B cell (primary cell): ENCODE measurements at regions of chr14 and their contacts with region 1.

Region 1: DNA sequence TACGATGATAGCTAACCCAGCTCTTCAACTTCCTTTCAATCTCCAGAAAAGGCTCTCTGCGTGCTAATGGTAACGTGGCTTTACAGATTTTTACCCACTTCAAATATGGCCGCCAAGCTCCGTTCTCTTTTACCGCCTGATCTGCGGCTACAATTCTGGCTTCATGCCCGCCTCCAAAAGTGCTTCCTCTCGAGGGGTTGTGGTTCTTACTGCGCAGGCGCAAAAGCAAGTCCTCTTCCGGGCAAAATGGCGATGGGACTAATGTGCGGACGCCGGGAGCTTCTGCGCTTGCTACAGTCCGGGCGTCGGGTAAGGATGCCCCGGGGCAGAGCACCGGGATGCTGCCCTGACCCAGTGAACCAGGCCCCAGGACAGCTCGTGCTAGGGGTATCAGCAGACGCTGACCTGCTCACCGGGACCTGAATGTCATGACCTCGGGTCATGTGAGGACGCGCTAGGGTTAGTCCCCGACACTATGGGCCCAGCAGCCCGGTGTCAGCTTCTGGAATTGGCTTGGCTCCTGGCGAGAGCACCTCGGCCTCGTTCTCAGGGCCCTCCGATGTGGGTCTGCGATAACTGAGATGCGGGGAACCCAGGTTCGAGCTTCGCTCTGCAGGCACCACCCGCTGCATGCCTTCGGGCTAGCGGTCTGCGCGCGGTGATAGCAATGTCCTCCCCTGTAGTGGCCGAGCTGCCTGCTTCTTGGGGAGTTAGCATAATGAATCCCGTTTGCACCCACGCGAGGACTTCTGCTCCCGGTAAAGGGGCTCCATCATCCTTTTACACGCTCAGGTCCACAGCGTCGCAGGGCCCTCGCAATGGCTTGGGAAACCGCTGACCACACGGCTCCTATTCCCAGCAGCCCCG is at the start of gene OXA1L:
- DNase-seq: peak; percentile 98
- ATAC-seq: peak; percentile 93
- H3K4me3 ChIP-seq: peak within 1 kb of the TSS; percentile 83 to 95 (median 92)
- H3K4me3 Mint-ChIP-seq: peak within 1 kb of the TSS; percentile 84
- H3K27ac ChIP-seq: peak within 1 kb of the TSS; percentile 84 to 89
- H3K27ac Mint-ChIP-seq: peak within 1 kb of the TSS; percentile 93
- H3K4me1 ChIP-seq: peaks cover 18 to 23% of the 10 kb centered on the region in 2 donors
- H3K4me1 Mint-ChIP-seq: peaks cover 34% of the 10 kb centered on the region
- H3K27me3 ChIP-seq: no peaks in the 10 kb centered on the region
- H3K27me3 Mint-ChIP-seq: no peaks in the 10 kb centered on the region
- CTCF ChIP-seq: no peak
- total RNA-seq, gene OXA1L: 186 and 201 TPM in 2 replicates

Region 2: GRCh38 chr14:22626590-22626989 is 140.1 kb before region 1 on chr14:
- CTCF ChIA-PET with region 1: no interaction called
- POLR2A ChIA-PET with region 1: interaction called, 10 read pairs
- intact Hi-C with region 1: no loop called
- DNase-seq: no peak
- ATAC-seq: no peak
- H3K4me3 ChIP-seq: no peak overlapping the region
- H3K4me3 Mint-ChIP-seq: no peak overlapping the region
- H3K27ac ChIP-seq: no peak overlapping the region
- H3K27ac Mint-ChIP-seq: no peak overlapping the region
- H3K4me1 ChIP-seq: no peaks in the 10 kb centered on the region
- H3K4me1 Mint-ChIP-seq: peaks cover 2% of the 10 kb centered on the region
- H3K27me3 ChIP-seq: peaks cover 0 to 10% (median 1%) of the 10 kb centered on the region in 4 experiments
- H3K27me3 Mint-ChIP-seq: peaks cover 30% of the 10 kb centered on the region
- CTCF ChIP-seq: no peak

Region 3: DNA sequence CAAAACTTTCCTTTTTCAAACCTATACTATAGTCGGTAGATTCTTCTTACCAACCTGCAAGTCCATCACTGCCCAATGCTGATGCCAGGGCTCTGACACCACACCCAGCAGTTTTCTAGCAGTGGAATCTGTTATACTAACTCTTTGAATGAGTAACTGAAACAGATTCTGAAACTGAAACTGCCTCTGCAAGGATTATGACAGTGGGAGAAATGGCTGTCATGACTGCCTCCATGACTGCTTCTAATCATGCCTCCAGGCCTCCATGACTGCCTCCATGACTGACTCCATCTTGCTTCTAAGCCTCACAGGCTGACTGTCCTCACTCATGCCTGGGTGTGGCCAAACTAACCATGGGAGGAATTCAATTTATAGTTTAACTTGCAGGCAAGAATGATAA is 29.6 kb before region 1 on chr14:
- CTCF ChIA-PET with region 1: no interaction called
- POLR2A ChIA-PET with region 1: no interaction called
- intact Hi-C with region 1: no loop called
- DNase-seq: no peak
- ATAC-seq: no peak
- H3K4me3 ChIP-seq: no peak overlapping the region
- H3K4me3 Mint-ChIP-seq: no peak overlapping the region
- H3K27ac ChIP-seq: no peak overlapping the region
- H3K27ac Mint-ChIP-seq: no peak overlapping the region
- H3K4me1 ChIP-seq: no peaks in the 10 kb centered on the region
- H3K4me1 Mint-ChIP-seq: peaks cover 5% of the 10 kb centered on the region
- H3K27me3 ChIP-seq: no peaks in the 10 kb centered on the region
- H3K27me3 Mint-ChIP-seq: peaks cover 3% of the 10 kb centered on the region
- CTCF ChIP-seq: no peak

Region 4: DNA sequence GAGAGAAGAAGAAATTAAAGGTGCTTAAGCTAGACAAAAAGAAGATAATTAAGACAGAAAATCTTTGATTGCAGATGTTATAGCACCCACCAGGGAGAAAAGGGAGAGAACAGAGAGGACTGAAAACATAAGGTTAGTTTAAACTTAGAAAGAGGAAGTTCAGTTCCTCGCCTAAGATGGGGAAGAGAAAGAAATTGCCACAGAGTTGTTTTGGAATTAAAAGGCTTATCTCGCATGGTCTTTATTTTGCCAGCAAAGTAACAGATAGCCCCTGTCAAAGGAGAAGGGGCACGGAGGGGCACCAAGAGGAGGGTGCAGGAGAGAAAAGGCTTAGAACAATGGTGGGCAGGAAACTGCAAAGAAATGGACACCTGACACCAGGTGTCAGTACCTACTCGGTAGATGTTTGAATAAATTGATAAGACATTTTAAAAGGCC is 18.0 kb before region 1 on chr14:
- CTCF ChIA-PET with region 1: interaction called, 16 read pairs
- POLR2A ChIA-PET with region 1: interaction called, 3 read pairs
- intact Hi-C with region 1: loop called (anchors 2 kb)
- DNase-seq: peak; percentile 71
- ATAC-seq: peak; percentile 80
- H3K4me3 ChIP-seq: peak overlapping the region in 4 of 5 experiments; percentile 8 to 58 (median 32)
- H3K4me3 Mint-ChIP-seq: peak overlapping the region; percentile 80
- H3K27ac ChIP-seq: peak overlapping the region; percentile 70 to 75
- H3K27ac Mint-ChIP-seq: peak overlapping the region; percentile 99
- H3K4me1 ChIP-seq: peaks cover 15 to 17% of the 10 kb centered on the region in 2 donors
- H3K4me1 Mint-ChIP-seq: peaks cover 20% of the 10 kb centered on the region
- H3K27me3 ChIP-seq: no peaks in the 10 kb centered on the region
- H3K27me3 Mint-ChIP-seq: no peaks in the 10 kb centered on the region
- CTCF ChIP-seq: peak; percentile 49

Region 5: DNA sequence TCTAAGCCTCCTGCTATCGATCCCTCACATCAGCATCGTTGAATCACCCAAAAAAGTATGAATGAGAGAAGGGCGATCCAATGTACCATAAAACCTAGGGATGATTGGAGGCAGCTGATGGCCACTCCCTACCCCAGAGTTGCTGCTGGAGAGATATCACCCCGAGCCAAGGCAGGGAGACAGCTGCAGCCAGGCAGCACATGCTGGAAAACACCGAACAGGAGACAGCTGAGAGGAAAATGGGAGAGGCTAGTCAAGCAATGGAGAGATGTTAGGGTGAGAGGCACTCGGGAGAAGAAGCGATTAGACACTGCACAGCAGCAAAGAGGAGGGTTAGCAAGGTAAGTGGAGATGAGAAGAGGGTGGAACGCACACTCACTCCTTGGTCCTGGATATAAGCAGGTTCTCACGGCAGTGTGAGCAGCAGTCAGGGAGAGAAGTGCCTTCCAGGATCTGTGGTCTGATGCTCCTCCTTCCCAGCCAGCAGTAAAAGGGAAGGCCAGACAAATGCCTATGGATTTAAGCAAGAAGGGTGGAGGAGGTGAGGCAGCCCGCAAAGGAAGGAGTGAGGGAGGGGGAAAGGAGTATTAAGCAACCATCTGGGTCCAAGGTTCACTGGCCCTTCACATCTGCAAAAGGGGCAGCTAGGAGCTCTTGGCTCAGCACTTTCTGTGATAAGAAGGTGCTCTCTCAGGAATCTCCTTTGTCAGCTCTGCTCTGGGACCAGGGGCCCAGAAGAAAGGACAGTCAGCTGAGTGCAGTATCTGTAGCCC is 48.4 kb after region 1 on chr14 and contains the start of gene SLC7A7:
- CTCF ChIA-PET with region 1: interaction called, 10 read pairs
- POLR2A ChIA-PET with region 1: interaction called, 12 read pairs
- intact Hi-C with region 1: no loop called
- DNase-seq: no peak
- ATAC-seq: no peak
- H3K4me3 ChIP-seq: peak within 1 kb of the TSS in 4 of 5 experiments; percentile 3 to 39 (median 13)
- H3K4me3 Mint-ChIP-seq: peak within 1 kb of the TSS; percentile 66
- H3K27ac ChIP-seq: peak within 1 kb of the TSS; percentile 63 to 71
- H3K27ac Mint-ChIP-seq: peak within 1 kb of the TSS; percentile 92
- H3K4me1 ChIP-seq: peaks cover 54 to 64% of the 10 kb centered on the region in 2 donors
- H3K4me1 Mint-ChIP-seq: peaks cover 73% of the 10 kb centered on the region
- H3K27me3 ChIP-seq: no peaks in the 10 kb centered on the region
- H3K27me3 Mint-ChIP-seq: no peaks in the 10 kb centered on the region
- CTCF ChIP-seq: no peak
- total RNA-seq, gene SLC7A7: 50.0 and 59.5 TPM in 2 replicates

Region 6: DNA sequence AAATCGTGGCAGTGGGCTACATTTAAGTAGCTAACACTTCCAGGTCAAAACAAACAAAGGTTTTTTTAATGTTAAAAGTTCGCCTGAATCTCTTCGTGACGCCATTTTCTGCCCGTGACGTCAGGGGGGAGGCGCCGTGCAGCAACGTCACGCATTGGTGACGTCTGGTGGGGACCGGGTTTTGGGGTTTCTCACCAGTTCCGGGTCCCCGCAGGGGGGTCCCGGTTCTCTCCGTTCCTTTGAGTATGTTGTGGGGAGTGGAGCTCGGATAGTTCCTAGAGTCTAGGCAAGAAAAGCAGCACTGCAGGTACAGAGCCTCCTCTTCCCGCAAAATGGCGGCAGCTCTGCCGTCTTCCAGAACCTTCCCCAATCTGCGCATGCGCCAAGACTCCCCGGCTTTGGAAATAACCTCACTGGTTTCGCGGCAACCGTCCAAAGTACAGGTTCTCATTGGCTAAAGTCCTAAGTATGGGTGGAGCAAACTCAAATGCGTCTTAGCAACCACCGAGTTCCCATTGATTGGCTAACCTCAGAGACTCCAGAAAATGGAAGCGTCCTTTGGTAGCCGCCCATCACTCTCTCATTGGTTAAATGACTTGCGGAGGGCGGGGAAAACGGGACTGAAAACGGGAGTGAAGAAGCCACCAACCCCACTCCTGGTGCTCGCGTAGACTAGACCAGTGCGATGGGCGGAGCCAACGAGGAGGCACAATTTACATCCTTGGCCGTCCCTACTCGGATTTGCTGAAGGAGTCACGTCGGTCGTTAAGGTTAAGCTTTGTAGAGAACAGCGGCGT is 152.3 kb after region 1 on chr14 and contains the start of gene RBM23:
- CTCF ChIA-PET with region 1: no interaction called
- POLR2A ChIA-PET with region 1: interaction called, 4 read pairs
- intact Hi-C with region 1: loop called (anchors 5 kb)
- DNase-seq: peak; percentile 100
- ATAC-seq: peak; percentile 87
- H3K4me3 ChIP-seq: peak within 1 kb of the TSS; percentile 72 to 98 (median 96)
- H3K4me3 Mint-ChIP-seq: peak within 1 kb of the TSS; percentile 93
- H3K27ac ChIP-seq: peak within 1 kb of the TSS; percentile 98 to 99
- H3K27ac Mint-ChIP-seq: peak within 1 kb of the TSS; percentile 99
- H3K4me1 ChIP-seq: peaks cover 16 to 28% of the 10 kb centered on the region in 2 donors
- H3K4me1 Mint-ChIP-seq: peaks cover 38% of the 10 kb centered on the region
- H3K27me3 ChIP-seq: no peaks in the 10 kb centered on the region
- H3K27me3 Mint-ChIP-seq: no peaks in the 10 kb centered on the region
- CTCF ChIP-seq: no peak
- total RNA-seq, gene RBM23: 165 and 188 TPM in 2 replicates

Region 7: GRCh38 chr14:23120541-23121251 is 354.0 kb after region 1 on chr14:
- CTCF ChIA-PET with region 1: no interaction called
- POLR2A ChIA-PET with region 1: no interaction called
- intact Hi-C with region 1: no loop called
- DNase-seq: peak; percentile 89
- ATAC-seq: peak; percentile 95
- H3K4me3 ChIP-seq: peak overlapping the region in 4 of 5 experiments; percentile 27 to 36 (median 30)
- H3K4me3 Mint-ChIP-seq: peak overlapping the region; percentile 79
- H3K27ac ChIP-seq: peak overlapping the region; percentile 72 to 88
- H3K27ac Mint-ChIP-seq: peak overlapping the region; percentile 89
- H3K4me1 ChIP-seq: peaks cover 32 to 35% of the 10 kb centered on the region in 2 donors
- H3K4me1 Mint-ChIP-seq: peaks cover 34% of the 10 kb centered on the region
- H3K27me3 ChIP-seq: no peaks in the 10 kb centered on the region
- H3K27me3 Mint-ChIP-seq: peaks cover 7% of the 10 kb centered on the region
- CTCF ChIP-seq: peak; percentile 99

Region 8: GRCh38 chr14:23183479-23183878 is 416.8 kb after region 1 on chr14 and contains the start of gene SLC7A8:
- CTCF ChIA-PET with region 1: no interaction called
- POLR2A ChIA-PET with region 1: no interaction called
- intact Hi-C with region 1: no loop called
- DNase-seq: peak; percentile 42
- ATAC-seq: peak; percentile 53
- H3K4me3 ChIP-seq: peak within 1 kb of the TSS; percentile 46 to 88 (median 74)
- H3K4me3 Mint-ChIP-seq: no peak within 1 kb of the TSS
- H3K27ac ChIP-seq: peak within 1 kb of the TSS in 1 of 2 donors; percentile 37
- H3K27ac Mint-ChIP-seq: no peak within 1 kb of the TSS
- H3K4me1 ChIP-seq: peaks cover 14 to 20% of the 10 kb centered on the region in 2 donors
- H3K4me1 Mint-ChIP-seq: no peaks in the 10 kb centered on the region
- H3K27me3 ChIP-seq: peaks cover 0 to 21% (median 5%) of the 10 kb centered on the region in 4 experiments
- H3K27me3 Mint-ChIP-seq: peaks cover 20% of the 10 kb centered on the region
- CTCF ChIP-seq: no peak
- total RNA-seq, gene SLC7A8: 0.85 and 1.1 TPM in 2 replicates